ENCODE measurements at regions of chr17 and their contacts with region 1.

Region 1: GRCh38 chr17:42101513-42102319 is 3.4 kb upstream of the ZNF385C start:
- DNase-seq: peak in 1 of 2 experiments; percentile 56
- H3K4me3 ChIP-seq: no peak overlapping the region
- H3K27ac ChIP-seq: no peak overlapping the region
- H3K4me1 ChIP-seq: no peaks in the 10 kb centered on the region
- H3K27me3 ChIP-seq: peaks cover 6% of the 10 kb centered on the region; the same call in 1 of the 2 replicates
- CTCF ChIP-seq: peak; percentile 84

Region 2: DNA sequence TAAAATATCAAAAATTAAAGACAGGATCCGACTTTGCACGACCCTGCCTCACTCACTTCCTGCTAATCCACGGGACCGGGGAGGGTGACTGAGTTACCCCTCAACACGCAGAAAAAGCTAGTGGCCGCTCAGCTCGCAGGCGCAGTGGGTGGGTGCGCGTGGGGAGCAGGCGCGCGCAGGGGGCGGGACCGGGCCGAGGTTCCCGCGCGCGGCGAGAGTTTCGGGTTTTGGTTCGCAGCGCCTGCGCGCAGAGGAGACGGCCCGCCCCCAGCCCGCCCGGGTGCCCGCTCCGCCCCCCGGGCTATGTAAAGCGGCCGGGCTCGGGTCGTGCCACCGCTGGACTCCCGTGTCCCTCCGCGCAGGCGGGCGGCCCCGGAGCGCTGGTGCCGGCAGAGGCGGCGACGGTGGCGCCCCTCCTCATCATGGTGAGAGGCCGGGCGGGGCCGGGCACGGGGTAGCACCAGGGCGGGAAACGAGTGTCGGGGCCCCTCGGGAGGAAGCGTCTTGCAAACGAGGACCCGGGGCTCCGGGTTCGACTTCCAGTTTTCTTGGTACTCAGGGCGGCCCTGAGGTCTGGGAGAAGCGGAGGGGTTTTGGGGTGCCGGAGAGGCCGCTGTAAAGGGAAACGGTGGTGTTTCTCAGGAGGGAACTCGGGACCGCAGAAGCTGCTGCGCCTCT is 135.1 kb before region 1 on chr17 and contains the start of gene CNP:
- CTCF ChIA-PET with region 1: no interaction called
- POLR2A ChIA-PET with region 1: no interaction called
- intact Hi-C with region 1: loop called (anchors 1 kb)
- DNase-seq: peak; percentile 69 to 90
- H3K4me3 ChIP-seq: peak within 1 kb of the TSS; percentile 78
- H3K27ac ChIP-seq: peak within 1 kb of the TSS; percentile 93
- H3K4me1 ChIP-seq: peaks cover 11% of the 10 kb centered on the region
- H3K27me3 ChIP-seq: no peaks in the 10 kb centered on the region
- CTCF ChIP-seq: no peak
- total RNA-seq, gene CNP: 60.6 and 64.7 TPM in 2 replicates

Region 3: GRCh38 chr17:42050393-42051012 is 51.2 kb before region 1 on chr17 and contains the start of gene C17orf113:
- CTCF ChIA-PET with region 1: no interaction called
- POLR2A ChIA-PET with region 1: no interaction called
- intact Hi-C with region 1: loop called (anchors 5 kb)
- DNase-seq: peak; percentile 47 to 54
- H3K4me3 ChIP-seq: peak within 1 kb of the TSS; percentile 64
- H3K27ac ChIP-seq: no peak within 1 kb of the TSS
- H3K4me1 ChIP-seq: 0 out of 2 replicates have a peak, but pooled peaks cover 3% of the 10 kb centered on the region
- H3K27me3 ChIP-seq: peaks cover 27% of the 10 kb centered on the region; the same call in 1 of the 2 replicates
- CTCF ChIP-seq: no peak; the same call in 1 of the 2 replicates
- total RNA-seq, gene C17orf113: 3.4 and 3.7 TPM in 2 replicates

Measured in PC-9 (cell line).